Gastrocnemius medialis (tissue), 4 donors: ENCODE measurements at regions of chr5 and their contacts with region 1.

Region 1: DNA sequence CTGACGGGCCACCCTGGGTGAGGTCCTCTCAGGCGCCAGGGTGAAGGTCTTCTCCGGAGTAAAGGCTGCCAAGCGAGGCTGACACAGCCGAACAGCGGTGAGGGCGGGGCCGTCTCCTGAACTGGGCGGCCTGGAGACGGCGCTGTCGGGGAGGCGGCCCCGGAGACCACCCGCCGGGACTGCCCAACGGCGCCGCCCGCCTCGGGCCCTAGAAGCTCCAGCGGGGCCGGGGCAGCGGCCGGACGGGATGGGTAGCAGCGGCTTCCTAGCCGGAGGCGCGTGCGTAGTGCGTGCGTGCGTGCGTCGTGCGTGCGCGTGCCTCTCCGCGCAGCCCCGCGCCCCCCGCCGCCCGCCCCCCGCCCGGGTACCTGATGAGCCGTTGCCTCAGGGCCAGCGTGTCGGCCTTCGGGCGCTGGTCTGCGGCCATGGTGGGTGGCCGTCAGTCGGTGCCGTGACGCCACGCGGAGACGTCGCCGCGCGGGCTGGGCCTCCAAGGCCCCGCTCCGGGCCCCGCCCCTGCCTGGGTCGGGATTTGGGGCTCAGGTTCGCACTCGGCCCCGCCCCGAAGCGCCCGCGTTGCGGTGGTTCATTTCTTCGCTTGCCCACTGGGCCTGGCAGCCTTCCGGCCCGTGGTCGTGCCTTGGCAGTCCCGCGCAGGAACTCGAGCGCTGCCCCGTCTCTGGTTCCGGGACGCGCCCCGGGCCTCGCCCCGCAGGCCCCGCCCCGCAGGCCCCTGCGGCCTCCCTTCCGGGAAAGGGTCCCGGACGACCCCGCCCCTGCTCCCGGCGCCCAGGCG is at the start of gene PHYKPL:
- DNase-seq: peak; percentile 39 to 76
- ATAC-seq: peak; percentile 42 to 55
- H3K4me3 ChIP-seq: peak within 1 kb of the TSS; percentile 60 to 76 (median 70)
- H3K27ac ChIP-seq: peak within 1 kb of the TSS; percentile 87 to 99 (median 94)
- H3K4me1 ChIP-seq: peaks cover 53 to 58% of the 10 kb centered on the region in 2 donors
- H3K27me3 ChIP-seq: no peaks in the 10 kb centered on the region
- CTCF ChIP-seq: peak in 1 of 5 experiments; percentile 6
- POLR2A ChIP-seq: peak; percentile 79 to 80
- total RNA-seq, gene PHYKPL: 25.0 to 54.6 (median 33.7) TPM

Region 2: GRCh38 chr5:178120868-178121357 is 111.4 kb before region 1 on chr5:
- in situ Hi-C with region 1: no loop called
- intact Hi-C with region 1: loop called (anchors 5 kb)
- DNase-seq: peak; percentile 89 to 95
- ATAC-seq: peak; percentile 81 to 89
- H3K4me3 ChIP-seq: peak overlapping the region; percentile 45 to 70 (median 54)
- H3K27ac ChIP-seq: peak overlapping the region; percentile 73 to 85 (median 78)
- H3K4me1 ChIP-seq: peaks cover 37 to 38% of the 10 kb centered on the region in 2 donors
- H3K27me3 ChIP-seq: peaks cover 5 to 12% (median 10%) of the 10 kb centered on the region in 3 donors
- CTCF ChIP-seq: peak; percentile 53 to 82 (median 69)
- POLR2A ChIP-seq: peak in 1 of 2 donors; percentile 14

Region 3: GRCh38 chr5:178331399-178331996 is 99.2 kb after region 1 on chr5:
- in situ Hi-C with region 1: no loop called
- intact Hi-C with region 1: loop called (anchors 1 kb)
- DNase-seq: peak; percentile 90 to 92
- ATAC-seq: peak; percentile 92 to 93
- H3K4me3 ChIP-seq: no peak overlapping the region
- H3K27ac ChIP-seq: peak overlapping the region; percentile 84 to 91 (median 86)
- H3K4me1 ChIP-seq: peaks cover 20 to 26% of the 10 kb centered on the region in 2 donors
- H3K27me3 ChIP-seq: no peaks in the 10 kb centered on the region
- CTCF ChIP-seq: no peak
- POLR2A ChIP-seq: peak; percentile 3 to 26

Region 4: DNA sequence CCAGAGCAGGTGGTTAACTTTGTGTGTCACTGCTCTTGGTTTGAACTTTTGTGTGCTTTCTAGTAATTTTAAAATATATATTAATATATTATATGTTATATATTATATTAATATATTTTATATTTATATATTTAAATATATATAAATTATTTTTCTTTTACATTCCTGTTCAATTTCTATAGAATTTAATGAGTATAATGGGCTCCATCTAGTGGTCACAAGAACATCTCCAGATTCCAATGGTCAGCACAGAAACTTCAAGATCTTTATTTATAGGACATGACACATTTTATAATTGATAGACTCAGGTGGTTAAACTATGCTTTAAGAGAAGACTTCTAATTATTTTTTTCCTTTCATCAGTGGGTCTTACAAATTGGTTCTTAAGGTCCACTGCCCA is 318.7 kb after region 1 on chr5:
- in situ Hi-C with region 1: no loop called
- intact Hi-C with region 1: loop called (anchors 2 kb)
- DNase-seq: no peak
- ATAC-seq: peak; percentile 72 to 83
- H3K4me3 ChIP-seq: no peak overlapping the region
- H3K27ac ChIP-seq: no peak overlapping the region
- H3K4me1 ChIP-seq: peaks cover 6 to 14% of the 10 kb centered on the region in 2 donors
- H3K27me3 ChIP-seq: no peaks in the 10 kb centered on the region
- CTCF ChIP-seq: peak in 3 of 5 experiments; percentile 29 to 64 (median 52)
- POLR2A ChIP-seq: no peak

Region 5: DNA sequence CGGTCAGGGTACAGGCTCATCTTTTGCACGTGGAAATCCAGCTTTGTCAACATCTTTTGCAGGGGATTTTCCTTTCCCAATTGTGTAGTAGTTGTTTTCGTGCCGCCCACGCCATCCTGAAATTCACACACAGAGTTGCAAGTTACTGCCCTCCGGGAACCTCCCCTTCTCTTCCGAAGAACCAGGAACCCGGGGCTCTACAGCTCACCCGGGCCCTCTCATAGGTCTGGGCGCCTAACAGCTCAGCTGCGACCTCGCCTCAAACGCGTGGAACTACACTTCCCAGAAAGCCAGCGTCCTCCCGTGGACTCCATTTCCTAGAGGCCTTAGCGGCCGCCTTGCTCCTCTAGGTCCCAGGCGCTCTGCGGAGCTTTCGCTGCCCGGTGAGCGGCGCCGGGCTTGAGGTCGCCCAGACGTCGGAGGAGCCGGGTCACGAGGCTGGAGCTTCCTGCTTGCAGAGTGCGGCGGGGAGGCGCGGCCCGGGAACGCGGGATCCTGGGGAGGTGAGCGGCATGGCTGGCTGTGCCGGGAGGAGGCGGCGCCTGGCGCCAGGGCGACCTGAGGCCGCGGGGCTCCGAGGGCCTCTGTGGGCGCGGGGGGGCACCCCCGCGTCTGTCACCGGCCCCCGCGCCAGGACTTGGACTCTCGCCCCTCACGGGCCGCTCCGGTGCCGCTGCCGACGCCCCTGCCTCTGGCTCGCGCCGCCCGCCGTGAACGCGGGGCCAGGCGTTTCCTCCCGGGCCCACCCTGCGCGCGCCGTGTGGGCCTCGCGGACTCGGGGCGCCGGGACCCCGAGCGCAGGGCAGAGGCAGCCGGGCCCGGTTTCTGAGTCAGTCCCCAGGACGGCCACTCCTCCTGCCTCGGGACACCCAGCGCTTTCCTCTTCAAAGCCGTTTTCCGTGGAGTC is 627.6 kb after region 1 on chr5 and contains the start of gene ZNF354B:
- in situ Hi-C with region 1: no loop called
- intact Hi-C with region 1: no loop called
- DNase-seq: peak; percentile 86
- ATAC-seq: peak; percentile 99
- H3K4me3 ChIP-seq: peak within 1 kb of the TSS; percentile 61 to 78 (median 66)
- H3K27ac ChIP-seq: peak within 1 kb of the TSS; percentile 70 to 85 (median 81)
- H3K4me1 ChIP-seq: peaks cover 2 to 6% of the 10 kb centered on the region in 2 donors
- H3K27me3 ChIP-seq: no peaks in the 10 kb centered on the region
- CTCF ChIP-seq: peak in 1 of 5 experiments; percentile 29
- POLR2A ChIP-seq: peak; percentile 61 to 73
- total RNA-seq, gene ZNF354B: 4.4 to 11.3 (median 5.0) TPM

Region 6: GRCh38 chr5:179559284-179560252 is 1327.2 kb after region 1 on chr5:
- in situ Hi-C with region 1: no loop called
- intact Hi-C with region 1: loop called (anchors 10 kb)
- DNase-seq: peak; percentile 95 to 98
- ATAC-seq: peak; percentile 100
- H3K4me3 ChIP-seq: peak overlapping the region; percentile 56 to 63 (median 58)
- H3K27ac ChIP-seq: peak overlapping the region; percentile 73 to 87 (median 79)
- H3K4me1 ChIP-seq: peaks cover 9 to 24% of the 10 kb centered on the region in 2 donors
- H3K27me3 ChIP-seq: no peaks in the 10 kb centered on the region
- CTCF ChIP-seq: no peak
- POLR2A ChIP-seq: peak; percentile 84 to 90